ENCODE measurements at regions of chr19 and their contacts with region 1.

Region 1: DNA sequence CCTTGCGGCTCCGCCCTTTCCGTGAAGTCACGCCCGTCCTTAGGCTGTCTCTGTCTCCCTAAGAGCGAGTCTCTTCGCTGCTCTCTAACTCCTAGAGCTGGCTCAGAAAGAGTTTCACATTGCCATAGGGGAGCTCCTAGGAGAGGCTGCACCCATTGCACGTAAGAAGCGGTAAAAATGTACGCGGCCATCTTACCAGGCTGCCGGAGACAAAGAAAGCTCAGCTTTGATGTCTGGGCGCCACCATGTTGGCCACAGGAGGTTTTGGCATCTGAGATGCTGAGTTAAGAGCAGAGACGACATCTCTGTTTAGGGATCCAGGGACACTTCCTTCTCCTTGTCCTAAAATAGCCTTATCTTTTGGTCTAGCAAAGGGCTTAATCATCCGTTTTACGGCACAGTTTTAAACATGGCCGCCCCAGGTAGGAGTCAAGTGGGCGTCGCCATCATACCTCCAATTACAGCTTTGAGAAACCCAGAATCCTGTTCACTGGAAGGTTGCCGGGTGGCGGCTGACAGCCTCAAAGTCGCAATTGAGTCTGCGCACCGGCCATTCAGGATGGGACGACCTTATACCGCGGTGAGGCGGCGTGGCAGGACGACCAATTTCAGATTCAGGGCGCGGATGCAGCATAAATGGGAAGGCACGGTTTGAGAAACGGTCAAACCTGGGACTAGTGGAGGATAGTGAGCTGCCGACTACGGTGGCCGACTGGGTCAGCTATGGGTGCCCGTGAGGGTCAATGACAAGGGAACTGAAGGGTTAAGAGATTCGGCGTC is at the start of gene ZNF793:
- DNase-seq: peak; percentile 63 to 89 (median 82)
- H3K4me3 ChIP-seq: peak within 1 kb of the TSS; percentile 67
- H3K4me3 Mint-ChIP-seq: no peak within 1 kb of the TSS
- H3K27ac ChIP-seq: peak within 1 kb of the TSS; percentile 86
- H3K27ac Mint-ChIP-seq: no peak within 1 kb of the TSS
- H3K4me1 ChIP-seq: peaks cover 9% of the 10 kb centered on the region
- H3K4me1 Mint-ChIP-seq: peaks cover 0 to 4% (median 0%) of the 10 kb centered on the region in 3 donors
- H3K27me3 ChIP-seq: no peaks in the 10 kb centered on the region
- H3K27me3 Mint-ChIP-seq: no peaks in the 10 kb centered on the region
- total RNA-seq, gene ZNF793: 3.9 to 4.1 TPM

Region 2: GRCh38 chr19:37466798-37467607 is 39.6 kb before region 1 on chr19 and contains the start of gene ZNF569:
- CTCF ChIA-PET with region 1: interaction called, 3 read pairs
- POLR2A ChIA-PET with region 1: interaction called, 21 read pairs
- DNase-seq: peak; percentile 78 to 93 (median 91)
- H3K4me3 ChIP-seq: peak within 1 kb of the TSS; percentile 94
- H3K4me3 Mint-ChIP-seq: peak within 1 kb of the TSS; percentile 87 to 99 (median 97)
- H3K27ac ChIP-seq: peak within 1 kb of the TSS; percentile 77
- H3K27ac Mint-ChIP-seq: peak within 1 kb of the TSS; percentile 89 to 98 (median 98)
- H3K4me1 ChIP-seq: peaks cover 24% of the 10 kb centered on the region
- H3K4me1 Mint-ChIP-seq: peaks cover 40 to 49% (median 47%) of the 10 kb centered on the region in 3 donors
- H3K27me3 ChIP-seq: no peaks in the 10 kb centered on the region
- H3K27me3 Mint-ChIP-seq: no peaks in the 10 kb centered on the region
- total RNA-seq, gene ZNF569: 7.4 to 8.0 TPM

Region 3: GRCh38 chr19:37519890-37520289 is 13.3 kb after region 1 on chr19:
- CTCF ChIA-PET with region 1: no interaction called
- POLR2A ChIA-PET with region 1: no interaction called
- DNase-seq: no peak
- H3K4me3 ChIP-seq: no peak overlapping the region
- H3K4me3 Mint-ChIP-seq: no peak overlapping the region
- H3K27ac ChIP-seq: no peak overlapping the region
- H3K27ac Mint-ChIP-seq: no peak overlapping the region
- H3K4me1 ChIP-seq: no peaks in the 10 kb centered on the region
- H3K4me1 Mint-ChIP-seq: no peaks in the 10 kb centered on the region
- H3K27me3 ChIP-seq: no peaks in the 10 kb centered on the region
- H3K27me3 Mint-ChIP-seq: no peaks in the 10 kb centered on the region

Measured in CD8-positive, alpha-beta memory T cell (primary cell).